GM10248 (cell line): ENCODE measurements at regions of chr1 and their contacts with region 1.

Region 1: GRCh38 chr1:178885869-178886268 is 15.0 kb upstream of the ANGPTL1 start:
- DNase-seq: no peak
- CTCF ChIP-seq: no peak

Region 2: DNA sequence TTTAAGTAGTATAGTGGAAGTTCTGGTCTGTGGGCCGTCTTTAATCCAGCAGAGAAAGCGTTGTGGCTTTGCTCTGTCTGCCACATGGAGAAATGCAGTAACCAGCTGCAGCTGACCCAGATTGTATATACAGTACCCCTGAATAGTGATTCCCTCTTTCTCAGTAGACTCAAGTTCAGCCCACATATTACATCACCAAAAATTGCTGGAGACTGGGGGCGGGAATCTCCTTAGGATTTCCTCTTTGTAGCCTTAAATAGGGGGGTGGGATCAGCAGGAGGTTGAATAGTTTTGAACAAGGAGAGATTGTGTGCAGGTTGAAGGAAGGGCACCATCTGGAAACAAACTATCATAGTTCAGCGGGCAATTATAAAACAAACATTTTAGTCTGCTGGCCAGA is 14.9 kb before region 1 on chr1 and contains the start of gene ANGPTL1:
- CTCF ChIA-PET with region 1: interaction called, 16 read pairs
- POLR2A ChIA-PET with region 1: no interaction called
- DNase-seq: no peak
- CTCF ChIP-seq: no peak